ENCODE measurements at regions of chr5 and their contacts with region 1.

Region 1: GRCh38 chr5:102681407-102681983 is 73.6 kb upstream of the PAM start:
- DNase-seq: peak; percentile 81
- ATAC-seq: peak; percentile 85
- H3K4me3 Mint-ChIP-seq: no peak overlapping the region
- H3K27ac Mint-ChIP-seq: no peak overlapping the region
- H3K4me1 Mint-ChIP-seq: no peaks in the 10 kb centered on the region
- H3K27me3 Mint-ChIP-seq: no peaks in the 10 kb centered on the region

Region 2: GRCh38 chr5:102792705-102793104 is 111.2 kb after region 1 on chr5:
- CTCF ChIA-PET with region 1: interaction called, 8 read pairs
- POLR2A ChIA-PET with region 1: no interaction called
- intact Hi-C with region 1: loop called (anchors 1 kb)
- DNase-seq: no peak
- ATAC-seq: peak; percentile 55
- H3K4me3 Mint-ChIP-seq: no peak overlapping the region
- H3K27ac Mint-ChIP-seq: no peak overlapping the region
- H3K4me1 Mint-ChIP-seq: peaks cover 6% of the 10 kb centered on the region
- H3K27me3 Mint-ChIP-seq: no peaks in the 10 kb centered on the region

Region 3: GRCh38 chr5:102799017-102799416 is 117.5 kb after region 1 on chr5:
- CTCF ChIA-PET with region 1: interaction called, 12 read pairs
- POLR2A ChIA-PET with region 1: no interaction called
- intact Hi-C with region 1: no loop called
- DNase-seq: no peak
- ATAC-seq: no peak
- H3K4me3 Mint-ChIP-seq: no peak overlapping the region
- H3K27ac Mint-ChIP-seq: no peak overlapping the region
- H3K4me1 Mint-ChIP-seq: peaks cover 42% of the 10 kb centered on the region
- H3K27me3 Mint-ChIP-seq: no peaks in the 10 kb centered on the region

Region 4: GRCh38 chr5:102971697-102972293 is 290.3 kb after region 1 on chr5:
- CTCF ChIA-PET with region 1: interaction called, 4 read pairs
- POLR2A ChIA-PET with region 1: no interaction called
- intact Hi-C with region 1: loop called (anchors 5 to 10 kb)
- DNase-seq: no peak
- ATAC-seq: no peak
- H3K4me3 Mint-ChIP-seq: no peak overlapping the region
- H3K27ac Mint-ChIP-seq: no peak overlapping the region
- H3K4me1 Mint-ChIP-seq: no peaks in the 10 kb centered on the region
- H3K27me3 Mint-ChIP-seq: no peaks in the 10 kb centered on the region

Region 5: DNA sequence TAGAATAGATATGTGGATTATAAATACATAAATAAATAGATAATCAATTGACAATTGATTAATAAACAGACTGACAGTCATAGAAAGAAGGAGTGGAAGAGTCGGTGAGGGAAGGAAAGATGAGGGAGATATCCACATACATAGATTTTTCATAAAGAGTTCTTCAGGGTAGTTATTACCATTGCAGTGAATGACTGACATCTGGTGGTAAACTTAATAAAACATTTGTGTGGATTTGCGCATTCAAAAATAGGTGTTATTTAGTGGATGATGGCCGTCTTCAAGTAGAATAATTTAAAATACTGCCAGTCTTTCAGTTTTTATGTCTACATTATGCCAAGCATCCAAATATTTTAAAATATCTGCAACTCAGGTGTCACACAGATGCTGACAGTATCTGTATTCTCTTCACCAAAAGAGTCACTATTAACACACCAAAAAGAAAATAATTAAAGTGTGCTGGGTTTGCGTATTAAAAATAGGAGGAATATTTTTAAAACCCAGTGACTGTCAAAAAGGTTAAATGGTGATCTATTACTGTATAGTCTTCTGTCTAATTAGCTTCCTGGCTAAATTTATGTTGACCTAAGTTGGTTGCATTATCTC is 359.7 kb after region 1 on chr5:
- CTCF ChIA-PET with region 1: interaction called, 12 read pairs
- POLR2A ChIA-PET with region 1: interaction called, 3 read pairs
- intact Hi-C with region 1: loop called (anchors 1 to 2 kb)
- DNase-seq: no peak
- ATAC-seq: no peak
- H3K4me3 Mint-ChIP-seq: no peak overlapping the region
- H3K27ac Mint-ChIP-seq: no peak overlapping the region
- H3K4me1 Mint-ChIP-seq: no peaks in the 10 kb centered on the region
- H3K27me3 Mint-ChIP-seq: no peaks in the 10 kb centered on the region